Activated CD8-positive, alpha-beta T cell treated with anti-CD3 and anti-CD28 coated beads for 36 hours (primary cell): ENCODE measurements at regions of chr11 and their contacts with region 1.

Region 1: DNA sequence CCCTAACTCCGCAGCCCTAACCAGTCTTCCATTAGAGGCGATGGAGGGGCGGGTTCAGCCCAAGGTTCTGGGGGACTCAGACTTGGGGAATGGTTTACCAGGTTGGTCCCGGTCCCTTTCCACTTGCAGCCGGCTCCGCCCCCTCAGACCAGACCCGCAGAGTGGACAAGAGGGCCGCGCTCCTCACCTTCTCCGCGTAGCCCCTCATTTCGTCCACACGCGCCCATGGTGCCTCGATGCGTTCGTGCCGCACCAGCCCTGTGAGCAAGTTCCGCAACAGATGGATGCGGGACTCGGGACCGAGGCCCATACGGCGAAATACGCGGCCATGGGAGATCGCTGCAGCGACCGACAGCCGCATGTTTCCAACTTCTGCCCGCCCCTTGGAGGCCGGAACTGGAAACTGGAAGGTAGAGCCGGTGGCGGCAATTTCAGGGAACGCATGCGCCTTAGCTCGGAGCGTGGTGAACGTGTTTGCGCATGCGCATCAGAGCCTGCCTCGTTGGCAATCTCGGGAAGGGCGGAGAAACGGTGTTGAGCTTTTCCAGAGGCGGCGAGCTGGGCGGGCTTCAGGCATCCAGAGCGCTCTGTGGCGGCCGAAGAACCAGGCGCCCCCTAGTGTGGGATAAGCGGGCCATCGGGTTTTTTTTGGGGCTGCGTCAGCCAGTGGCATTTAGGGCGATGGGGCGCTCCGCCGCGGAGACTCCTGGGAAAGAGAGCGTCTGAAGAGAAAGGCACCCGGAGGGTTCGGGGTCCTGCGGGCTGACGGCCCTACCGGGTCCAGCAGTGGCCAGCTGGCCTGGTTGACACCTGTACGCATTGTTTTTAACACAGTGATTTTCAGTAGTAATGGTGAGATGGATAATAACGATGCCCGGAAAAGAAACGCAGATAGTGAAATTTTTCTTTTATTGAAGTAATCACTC is at the start of gene MRPL17:
- DNase-seq: peak; percentile 99
- ATAC-seq: peak; percentile 96
- H3K4me3 Mint-ChIP-seq: peak within 1 kb of the TSS; percentile 97
- H3K27ac Mint-ChIP-seq: peak within 1 kb of the TSS; percentile 98
- H3K4me1 Mint-ChIP-seq: peaks cover 28% of the 10 kb centered on the region
- H3K27me3 Mint-ChIP-seq: no peaks in the 10 kb centered on the region
- CTCF ChIP-seq: peak; percentile 79
- total RNA-seq, gene MRPL17: 140 to 144 TPM

Region 2: DNA sequence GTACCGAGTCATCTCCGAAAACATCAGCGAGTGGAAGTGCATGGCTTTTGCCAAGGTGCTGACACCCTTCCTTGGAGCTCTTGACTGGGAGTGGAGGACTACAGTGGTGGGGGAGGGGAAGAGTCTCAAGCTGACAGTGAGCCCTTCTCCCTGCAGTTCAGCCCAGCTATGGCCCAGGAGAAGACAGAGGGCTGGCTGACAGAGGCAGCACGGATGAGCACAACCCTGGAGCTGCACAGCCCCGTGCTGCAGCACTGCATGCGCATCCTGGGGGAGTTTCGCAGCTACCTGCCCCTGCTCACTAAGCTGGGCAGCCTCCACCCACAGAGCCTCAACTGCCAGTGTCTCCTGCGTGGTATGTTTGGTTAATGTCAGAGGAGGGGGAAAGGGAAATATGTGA is 144.7 kb before region 1 on chr11:
- CTCF ChIA-PET with region 1: interaction called, 3 read pairs
- POLR2A ChIA-PET with region 1: no interaction called
- intact Hi-C with region 1: loop called (anchors 5 kb)
- DNase-seq: no peak
- ATAC-seq: no peak
- H3K4me3 Mint-ChIP-seq: no peak overlapping the region
- H3K27ac Mint-ChIP-seq: no peak overlapping the region
- H3K4me1 Mint-ChIP-seq: peaks cover 6% of the 10 kb centered on the region
- H3K27me3 Mint-ChIP-seq: no peaks in the 10 kb centered on the region
- CTCF ChIP-seq: no peak

Region 3: GRCh38 chr11:6612213-6613041 is 70.8 kb before region 1 on chr11 and contains the start of gene TAF10:
- CTCF ChIA-PET with region 1: interaction called, 32 read pairs
- POLR2A ChIA-PET with region 1: interaction called, 48 read pairs
- intact Hi-C with region 1: loop called (anchors 2 kb)
- DNase-seq: peak; percentile 98
- ATAC-seq: peak; percentile 88
- H3K4me3 Mint-ChIP-seq: no peak within 1 kb of the TSS
- H3K27ac Mint-ChIP-seq: peak within 1 kb of the TSS; percentile 92
- H3K4me1 Mint-ChIP-seq: peaks cover 38% of the 10 kb centered on the region
- H3K27me3 Mint-ChIP-seq: no peaks in the 10 kb centered on the region
- CTCF ChIP-seq: peak; percentile 69
- total RNA-seq, gene TAF10: 151 to 160 TPM

Region 4: GRCh38 chr11:6667733-6668374 is 15.3 kb before region 1 on chr11:
- CTCF ChIA-PET with region 1: interaction called, 21 read pairs
- POLR2A ChIA-PET with region 1: interaction called, 27 read pairs
- intact Hi-C with region 1: no loop called
- DNase-seq: peak; percentile 59
- ATAC-seq: peak; percentile 78
- H3K4me3 Mint-ChIP-seq: no peak overlapping the region
- H3K27ac Mint-ChIP-seq: peak overlapping the region; percentile 73
- H3K4me1 Mint-ChIP-seq: peaks cover 57% of the 10 kb centered on the region
- H3K27me3 Mint-ChIP-seq: no peaks in the 10 kb centered on the region
- CTCF ChIP-seq: peak; percentile 75

Region 5: GRCh38 chr11:6737872-6738466 is 54.8 kb after region 1 on chr11:
- CTCF ChIA-PET with region 1: interaction called, 19 read pairs
- POLR2A ChIA-PET with region 1: no interaction called
- intact Hi-C with region 1: no loop called
- DNase-seq: peak; percentile 86
- ATAC-seq: peak; percentile 57
- H3K4me3 Mint-ChIP-seq: no peak overlapping the region
- H3K27ac Mint-ChIP-seq: peak overlapping the region; percentile 78
- H3K4me1 Mint-ChIP-seq: peaks cover 84% of the 10 kb centered on the region
- H3K27me3 Mint-ChIP-seq: no peaks in the 10 kb centered on the region
- CTCF ChIP-seq: peak; percentile 72

Region 6: GRCh38 chr11:6871278-6871677 is 188.1 kb after region 1 on chr11:
- CTCF ChIA-PET with region 1: no interaction called
- POLR2A ChIA-PET with region 1: no interaction called
- intact Hi-C with region 1: no loop called
- DNase-seq: no peak
- ATAC-seq: no peak
- H3K4me3 Mint-ChIP-seq: no peak overlapping the region
- H3K27ac Mint-ChIP-seq: no peak overlapping the region
- H3K4me1 Mint-ChIP-seq: no peaks in the 10 kb centered on the region
- H3K27me3 Mint-ChIP-seq: peaks cover 8% of the 10 kb centered on the region
- CTCF ChIP-seq: no peak